Mammary epithelial cell (primary cell): ENCODE measurements at regions of chr14 and their contacts with region 1.

Region 1: GRCh38 chr14:24036169-24036962 is 15.4 kb upstream of the CARMIL3 start:
- DNase-seq: peak; percentile 70
- H3K4me3 ChIP-seq: peak overlapping the region; percentile 64
- H3K27ac ChIP-seq: peak overlapping the region; percentile 34
- H3K4me1 ChIP-seq: no peaks in the 10 kb centered on the region
- H3K27me3 ChIP-seq: no peaks in the 10 kb centered on the region
- CTCF ChIP-seq: peak; percentile 68 to 86

Region 2: DNA sequence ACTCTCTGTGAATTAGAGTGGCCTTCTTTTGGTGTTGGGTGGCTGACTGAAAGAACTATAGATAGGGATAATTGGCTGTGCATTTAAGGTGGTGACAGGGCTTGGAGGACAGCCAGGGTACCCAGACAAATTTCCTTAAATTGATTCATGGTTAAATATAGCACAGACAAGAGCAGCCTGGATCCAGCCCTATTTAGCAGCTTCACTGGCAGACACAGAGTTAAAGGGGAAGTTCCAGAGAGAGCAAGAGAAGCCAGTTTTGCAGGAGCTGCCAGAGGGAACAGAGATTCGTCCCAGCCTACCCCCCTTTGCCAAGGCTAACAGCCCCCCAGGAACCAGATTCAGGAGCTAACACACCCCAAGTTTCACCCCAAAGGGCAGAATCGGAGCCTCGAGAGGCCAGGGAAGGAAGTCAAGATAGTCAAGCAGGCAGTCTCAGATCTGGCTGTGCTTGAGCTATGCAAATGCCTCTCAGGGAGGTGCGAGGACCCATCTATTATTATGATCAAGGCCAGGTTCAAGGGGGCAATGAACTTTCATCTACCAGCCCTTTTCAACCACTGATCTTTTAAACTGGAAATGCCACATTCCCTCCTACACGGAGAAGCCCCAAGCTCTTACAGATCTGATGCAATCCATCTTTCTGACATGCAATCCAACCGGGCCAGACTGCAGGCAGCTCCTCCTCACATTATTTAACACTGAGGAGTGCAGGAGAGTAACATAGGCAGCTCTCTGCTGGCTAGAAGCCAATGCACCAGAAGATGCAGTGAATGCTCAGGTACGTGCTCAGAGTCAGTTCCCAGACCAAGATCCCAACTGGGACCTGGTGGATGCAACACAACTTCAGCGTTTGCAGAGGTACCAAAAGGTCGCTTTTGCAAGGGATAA is 342.0 kb before region 1 on chr14:
- CTCF ChIA-PET with region 1: no interaction called
- dilution Hi-C with region 1: no loop called
- in situ Hi-C with region 1: no loop called
- intact Hi-C with region 1: loop called (anchors 10 kb)
- DNase-seq: peak; percentile 22
- H3K4me3 ChIP-seq: no peak overlapping the region
- H3K27ac ChIP-seq: no peak overlapping the region
- H3K4me1 ChIP-seq: peaks cover 5% of the 10 kb centered on the region
- H3K27me3 ChIP-seq: no peaks in the 10 kb centered on the region
- CTCF ChIP-seq: no peak

Region 3: DNA sequence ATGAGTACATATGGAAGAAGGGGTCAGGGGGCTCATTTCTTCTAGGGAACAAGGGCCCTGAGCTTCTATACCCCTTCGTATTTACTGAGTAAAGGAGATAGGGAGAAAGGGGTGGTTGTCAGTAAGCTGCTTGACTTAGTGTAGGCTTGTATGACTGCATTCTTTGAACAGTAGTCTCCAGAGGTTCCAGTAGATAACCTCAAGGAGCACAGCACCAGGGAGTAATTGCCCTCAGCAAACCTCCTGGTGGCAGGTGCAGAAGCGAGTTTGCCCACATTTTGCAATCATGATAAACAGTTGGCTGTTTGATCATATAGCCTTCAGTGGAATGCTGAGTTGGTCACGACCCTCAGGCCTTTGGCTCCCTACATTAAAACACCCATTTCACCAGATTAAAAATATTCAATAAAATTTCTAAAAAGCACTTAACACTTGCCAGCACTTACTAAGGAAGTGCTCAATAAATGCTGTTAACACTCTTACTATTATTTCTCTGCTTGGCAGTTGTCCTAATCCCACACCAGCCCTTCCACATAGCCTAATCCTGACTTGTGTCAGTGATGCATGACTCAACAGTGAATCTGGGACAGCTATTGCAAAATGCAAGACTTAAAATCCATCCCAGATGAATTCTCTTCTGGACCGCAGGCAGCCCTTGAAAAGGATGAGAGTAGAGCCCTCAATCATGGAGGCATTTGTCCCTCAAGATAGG is 51.3 kb before region 1 on chr14:
- CTCF ChIA-PET with region 1: no interaction called
- dilution Hi-C with region 1: no loop called
- in situ Hi-C with region 1: no loop called
- intact Hi-C with region 1: loop called (anchors 5 kb)
- DNase-seq: peak; percentile 70
- H3K4me3 ChIP-seq: no peak overlapping the region
- H3K27ac ChIP-seq: no peak overlapping the region
- H3K4me1 ChIP-seq: peaks cover 10% of the 10 kb centered on the region
- H3K27me3 ChIP-seq: no peaks in the 10 kb centered on the region
- CTCF ChIP-seq: peak in 1 of 2 donors; percentile 13